ENCODE measurements at regions of chr4 and their contacts with region 1.

Region 1: DNA sequence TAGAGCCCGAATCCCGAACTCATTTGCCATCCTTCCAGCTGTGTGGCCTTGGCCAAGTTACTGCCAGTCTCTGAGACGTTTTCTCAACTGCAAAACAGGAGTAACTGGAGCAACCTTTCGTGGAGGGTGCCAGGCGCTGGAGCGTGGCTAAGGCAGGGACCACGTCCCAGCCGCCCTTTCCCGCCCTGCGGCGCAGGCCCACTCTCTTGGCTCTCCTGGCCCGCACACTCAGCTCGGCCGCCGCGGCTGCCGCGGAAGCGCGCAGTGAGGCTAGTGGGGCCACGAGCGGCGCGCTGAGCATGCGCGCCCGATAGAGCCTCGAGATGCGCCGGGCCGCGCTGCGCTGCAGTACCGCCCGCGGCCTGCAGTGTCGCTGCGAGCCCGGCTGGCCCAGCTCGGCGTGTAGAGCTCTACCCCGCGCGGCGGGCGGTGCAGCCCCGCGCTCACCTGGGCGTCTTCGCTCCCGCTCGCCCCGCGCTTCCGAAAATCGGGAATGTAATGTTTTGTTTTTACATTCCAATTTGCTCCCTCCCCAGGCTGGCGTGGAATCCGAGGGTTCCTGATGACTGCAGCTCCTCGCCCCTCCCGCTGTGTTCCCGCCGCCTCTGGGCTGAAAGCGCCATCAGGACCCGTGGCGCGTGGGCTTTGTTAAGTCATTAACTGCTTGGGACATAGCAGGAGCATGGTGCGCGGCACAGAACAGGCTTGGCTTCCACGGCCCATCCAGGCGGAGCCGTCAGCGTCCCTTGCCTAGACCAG is 4.0 kb upstream of the ZNF518B start:
- DNase-seq: peak; percentile 41 to 93 (median 70)
- ATAC-seq: peak; percentile 83
- H3K4me3 ChIP-seq: peak overlapping the region; percentile 62
- H3K4me3 Mint-ChIP-seq: peak overlapping the region; percentile 83
- H3K27ac ChIP-seq: no peak overlapping the region
- H3K27ac Mint-ChIP-seq: no peak overlapping the region
- H3K4me1 ChIP-seq: peaks cover 32% of the 10 kb centered on the region
- H3K4me1 Mint-ChIP-seq: peaks cover 26% of the 10 kb centered on the region
- H3K27me3 ChIP-seq: peaks cover 12 to 14% of the 10 kb centered on the region in 2 experiments
- H3K27me3 Mint-ChIP-seq: peaks cover 41% of the 10 kb centered on the region
- CTCF ChIP-seq: peak; percentile 95

Region 2: DNA sequence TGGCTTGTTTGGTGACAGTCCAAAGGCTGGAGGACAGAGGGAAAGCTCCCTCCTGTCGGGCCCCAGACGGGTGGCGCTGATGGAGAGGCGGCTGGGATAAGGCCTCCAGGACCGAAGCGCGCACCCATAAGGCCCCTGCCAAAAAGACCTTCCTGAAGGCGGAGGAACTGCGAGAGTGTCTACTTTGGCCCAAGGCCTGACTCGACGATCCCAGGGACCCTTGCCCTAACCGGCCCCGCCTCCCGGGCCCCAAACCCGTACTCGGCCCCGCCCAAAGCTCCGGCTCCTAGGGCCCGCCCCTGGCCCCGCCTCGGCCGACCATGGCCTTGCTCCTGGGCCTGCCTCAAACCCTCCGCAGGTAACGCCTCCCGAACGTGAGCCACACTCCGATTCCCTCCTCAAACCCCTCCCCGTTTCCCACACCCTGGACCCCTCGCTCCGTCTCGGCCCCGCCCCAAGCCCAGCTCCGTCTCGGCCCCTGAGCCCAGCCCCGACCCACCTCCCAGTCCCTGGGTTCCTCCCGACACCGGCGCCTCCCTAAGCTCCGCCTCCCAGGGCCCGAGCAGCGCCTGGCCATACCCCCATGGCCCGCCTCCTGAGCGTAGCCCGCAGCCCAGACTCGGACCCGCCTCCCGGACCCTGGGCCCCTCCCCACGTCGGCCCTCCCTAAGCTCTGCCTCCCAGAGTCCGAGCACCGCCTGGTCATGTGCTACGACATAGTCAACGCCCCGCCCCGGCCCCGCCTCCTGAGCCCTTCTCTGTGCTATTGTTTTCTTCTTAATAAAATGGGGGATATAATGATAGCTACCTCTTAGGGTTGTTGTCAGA is 769.8 kb before region 1 on chr4:
- CTCF ChIA-PET with region 1: no interaction called
- POLR2A ChIA-PET with region 1: interaction called, 11 read pairs
- intact Hi-C with region 1: loop called in 1 of 2 experiments (anchors 5 kb)
- DNase-seq: peak; percentile 77 to 97 (median 88)
- ATAC-seq: peak; percentile 99
- H3K4me3 ChIP-seq: peak overlapping the region; percentile 72
- H3K4me3 Mint-ChIP-seq: peak overlapping the region; percentile 92
- H3K27ac ChIP-seq: peak overlapping the region; percentile 67 to 73
- H3K27ac Mint-ChIP-seq: peak overlapping the region; percentile 85
- H3K4me1 ChIP-seq: peaks cover 8% of the 10 kb centered on the region
- H3K4me1 Mint-ChIP-seq: peaks cover 26% of the 10 kb centered on the region
- H3K27me3 ChIP-seq: no peaks in the 10 kb centered on the region
- H3K27me3 Mint-ChIP-seq: no peaks in the 10 kb centered on the region
- CTCF ChIP-seq: no peak

Region 3: DNA sequence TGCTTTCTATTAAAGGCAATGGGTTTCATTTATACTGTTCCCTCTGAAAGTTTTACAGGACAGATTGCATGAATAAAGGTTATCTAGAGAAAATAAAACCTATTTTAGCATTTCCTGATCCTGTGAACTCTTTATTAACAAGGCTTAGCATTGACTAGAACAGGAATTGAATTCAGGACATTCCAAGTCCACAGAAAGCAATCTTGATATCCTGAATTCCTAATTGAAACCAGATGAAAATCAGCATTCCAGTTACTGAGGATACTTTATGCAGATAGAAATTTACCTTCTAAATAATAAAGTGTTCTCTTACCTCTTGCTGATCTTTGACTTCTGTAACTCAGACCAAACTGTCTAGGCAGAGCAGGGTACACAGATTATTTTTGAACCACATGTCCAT is 155.5 kb before region 1 on chr4:
- CTCF ChIA-PET with region 1: no interaction called
- POLR2A ChIA-PET with region 1: no interaction called
- intact Hi-C with region 1: no loop called
- DNase-seq: no peak
- ATAC-seq: no peak
- H3K4me3 ChIP-seq: no peak overlapping the region
- H3K4me3 Mint-ChIP-seq: no peak overlapping the region
- H3K27ac ChIP-seq: no peak overlapping the region
- H3K27ac Mint-ChIP-seq: no peak overlapping the region
- H3K4me1 ChIP-seq: no peaks in the 10 kb centered on the region
- H3K4me1 Mint-ChIP-seq: no peaks in the 10 kb centered on the region
- H3K27me3 ChIP-seq: no peaks in the 10 kb centered on the region
- H3K27me3 Mint-ChIP-seq: no peaks in the 10 kb centered on the region
- CTCF ChIP-seq: no peak

Region 4: DNA sequence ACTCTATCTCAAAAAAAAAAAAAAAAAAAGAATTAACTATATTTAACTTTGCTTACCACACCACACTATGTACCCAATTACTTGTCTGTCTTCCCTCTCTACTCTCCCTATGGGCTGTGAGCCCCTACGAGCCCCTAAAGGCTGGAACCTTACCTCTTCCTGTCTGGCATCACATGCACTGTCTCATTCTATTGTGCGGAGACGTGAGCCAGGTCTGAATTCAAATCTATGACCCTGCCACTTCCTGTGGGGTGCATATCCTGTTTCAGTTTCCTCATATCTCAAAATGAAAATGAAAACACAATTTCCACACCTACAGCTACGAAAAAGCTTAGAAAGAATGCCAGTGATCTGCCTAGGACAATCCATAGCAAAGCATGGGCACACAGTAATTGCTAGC is 1010.3 kb after region 1 on chr4:
- CTCF ChIA-PET with region 1: no interaction called
- POLR2A ChIA-PET with region 1: no interaction called
- intact Hi-C with region 1: loop called in 1 of 2 experiments (anchors 10 kb)
- DNase-seq: peak; percentile 3 to 91 (median 46)
- ATAC-seq: peak; percentile 96
- H3K4me3 ChIP-seq: peak overlapping the region; percentile 49
- H3K4me3 Mint-ChIP-seq: peak overlapping the region; percentile 83
- H3K27ac ChIP-seq: peak overlapping the region; percentile 59 to 69
- H3K27ac Mint-ChIP-seq: peak overlapping the region; percentile 92
- H3K4me1 ChIP-seq: peaks cover 26% of the 10 kb centered on the region
- H3K4me1 Mint-ChIP-seq: peaks cover 36% of the 10 kb centered on the region
- H3K27me3 ChIP-seq: no peaks in the 10 kb centered on the region
- H3K27me3 Mint-ChIP-seq: no peaks in the 10 kb centered on the region
- CTCF ChIP-seq: no peak

Measured in CD4-positive, alpha-beta T cell (primary cell).